ENCODE measurements at regions of chr10 and their contacts with region 1.

Region 1: GRCh38 chr10:119859420-119860258 is 13.0 kb downstream of the MCMBP start:
- DNase-seq: no peak
- ATAC-seq: no peak
- H3K4me3 ChIP-seq: no peak overlapping the region
- H3K27ac ChIP-seq: no peak overlapping the region
- H3K4me1 ChIP-seq: no peaks in the 10 kb centered on the region
- H3K27me3 ChIP-seq: no peaks in the 10 kb centered on the region

Region 2: GRCh38 chr10:119391440-119392251 is 468.0 kb before region 1 on chr10:
- intact Hi-C with region 1: no loop called
- DNase-seq: peak in 2 of 3 donors; percentile 48 to 51
- ATAC-seq: peak in 1 of 2 donors; percentile 31
- H3K4me3 ChIP-seq: no peak overlapping the region
- H3K27ac ChIP-seq: no peak overlapping the region
- H3K4me1 ChIP-seq: peaks cover 22% of the 10 kb centered on the region
- H3K27me3 ChIP-seq: no peaks in the 10 kb centered on the region

Region 3: DNA sequence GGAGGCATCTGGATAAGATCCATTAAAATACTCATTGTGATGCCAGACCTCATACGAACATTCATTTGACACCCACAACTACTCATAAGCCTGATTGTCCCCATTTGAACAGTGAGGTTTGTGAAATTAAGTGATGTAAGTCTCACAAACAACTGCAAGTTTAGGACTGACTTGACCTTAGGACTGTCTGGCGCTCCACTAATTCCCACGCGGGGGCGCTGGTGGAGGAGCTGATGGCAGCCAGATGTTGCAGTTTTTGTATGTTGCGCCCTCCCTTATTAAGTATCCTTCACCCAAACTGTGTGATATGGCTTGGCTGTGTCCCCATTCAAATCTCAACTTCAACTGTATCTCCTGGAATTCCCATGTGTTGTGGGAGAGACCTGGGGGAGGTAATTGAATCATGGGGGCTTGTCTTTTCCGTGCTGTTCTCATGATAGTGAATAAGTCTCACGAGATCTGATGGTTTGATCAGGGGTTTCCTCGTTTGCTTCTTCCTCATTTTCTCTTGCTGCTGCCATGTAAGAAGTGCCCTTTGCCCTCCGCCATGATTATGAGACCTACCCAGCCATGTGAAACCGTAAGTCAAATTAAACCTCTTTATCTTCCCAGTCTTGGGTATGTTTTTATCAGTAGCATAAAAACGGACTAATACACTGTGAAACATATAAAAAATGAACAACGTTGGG is 242.6 kb before region 1 on chr10:
- intact Hi-C with region 1: loop called in 1 of 4 experiments (anchors 10 kb)
- DNase-seq: peak; percentile 52 to 66 (median 64)
- ATAC-seq: no peak
- H3K4me3 ChIP-seq: no peak overlapping the region
- H3K27ac ChIP-seq: no peak overlapping the region
- H3K4me1 ChIP-seq: peaks cover 3% of the 10 kb centered on the region
- H3K27me3 ChIP-seq: no peaks in the 10 kb centered on the region

Region 4: DNA sequence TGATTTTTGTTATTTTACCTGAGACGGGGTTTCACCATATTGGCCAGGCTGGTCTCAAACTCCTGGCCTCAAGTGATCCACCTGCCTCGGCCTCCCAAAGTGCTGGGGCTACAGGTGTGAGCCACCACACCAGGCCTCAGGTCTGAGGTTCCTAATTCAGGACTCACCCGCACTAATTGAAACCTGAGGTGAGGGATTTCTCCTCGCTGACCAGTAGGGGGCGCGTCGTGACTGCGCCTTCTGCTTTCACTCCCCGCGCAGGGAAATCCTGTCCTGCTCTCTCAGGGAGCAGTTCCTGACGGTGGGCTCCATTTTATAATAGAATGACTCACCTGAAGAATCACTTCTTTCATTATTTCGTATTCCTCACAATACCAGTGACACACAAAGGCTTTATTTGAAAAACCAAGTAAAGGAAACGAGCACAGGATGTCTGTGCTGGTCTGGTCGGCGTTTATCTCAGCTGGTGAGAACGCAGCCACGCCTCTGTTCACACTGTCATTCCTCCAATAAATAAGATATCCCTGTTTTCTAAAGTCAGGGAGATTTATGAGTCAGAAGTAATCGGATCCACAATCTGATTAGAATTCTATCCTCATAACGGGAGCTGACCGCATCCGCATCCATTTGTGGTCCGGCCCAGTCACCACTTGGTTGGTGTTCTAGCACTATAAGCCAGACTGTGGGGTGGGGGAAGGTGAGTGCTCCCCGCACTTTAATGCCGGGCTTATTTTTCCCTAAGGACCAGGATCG is 173.0 kb before region 1 on chr10:
- intact Hi-C with region 1: loop called in 2 of 4 experiments (anchors 5 to 10 kb)
- DNase-seq: peak; percentile 82 to 92 (median 86)
- ATAC-seq: peak; percentile 82 to 88
- H3K4me3 ChIP-seq: peak overlapping the region; percentile 6
- H3K27ac ChIP-seq: no peak overlapping the region
- H3K4me1 ChIP-seq: peaks cover 3% of the 10 kb centered on the region
- H3K27me3 ChIP-seq: no peaks in the 10 kb centered on the region

Region 5: DNA sequence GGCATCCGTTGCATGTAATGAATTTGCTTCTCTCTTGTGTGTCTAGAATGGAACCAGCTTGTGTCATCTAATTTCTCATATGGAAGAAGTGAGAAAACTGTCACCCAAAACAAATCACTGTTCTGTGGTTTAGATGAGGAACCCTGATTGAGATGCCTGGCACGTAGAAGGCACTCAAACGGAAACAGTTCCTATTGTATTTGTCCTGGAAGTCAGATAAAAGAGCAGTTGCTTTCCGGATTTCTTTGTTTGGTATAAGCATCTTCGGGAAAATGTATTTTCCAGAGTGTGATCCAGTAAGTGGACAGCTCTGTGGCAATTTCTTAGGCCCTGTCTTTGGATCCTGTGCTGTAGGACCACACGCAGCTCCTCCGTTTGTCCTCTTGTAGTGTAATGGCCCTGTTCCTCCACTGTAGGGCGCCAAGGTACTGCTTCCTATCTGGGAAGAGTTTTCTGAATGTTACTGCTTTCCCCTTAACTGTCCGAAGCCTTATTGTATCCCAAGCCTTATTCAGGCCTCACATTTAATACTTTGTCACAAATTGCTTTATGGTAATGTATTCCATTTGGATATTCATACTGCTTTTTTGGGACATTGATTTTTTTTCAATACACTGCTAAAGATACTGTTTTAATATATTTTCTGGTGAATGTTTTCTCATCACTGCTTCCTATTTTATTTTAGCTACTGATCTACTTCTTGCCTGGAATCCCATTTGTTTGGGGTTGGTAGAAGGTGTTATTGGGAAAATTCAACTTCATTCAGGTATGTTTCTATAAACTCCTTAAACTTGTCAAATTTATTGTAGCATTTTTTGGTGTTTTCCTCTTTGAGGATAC is 109.0 kb before region 1 on chr10:
- intact Hi-C with region 1: loop called in 3 of 4 experiments (anchors 5 to 10 kb)
- DNase-seq: peak; percentile 57 to 80 (median 66)
- ATAC-seq: peak; percentile 92 to 96
- H3K4me3 ChIP-seq: no peak overlapping the region
- H3K27ac ChIP-seq: no peak overlapping the region
- H3K4me1 ChIP-seq: no peaks in the 10 kb centered on the region
- H3K27me3 ChIP-seq: no peaks in the 10 kb centered on the region

Region 6: GRCh38 chr10:120011359-120012130 is 151.9 kb after region 1 on chr10:
- intact Hi-C with region 1: no loop called
- DNase-seq: peak in 1 of 3 donors; percentile 42
- ATAC-seq: no peak
- H3K4me3 ChIP-seq: no peak overlapping the region
- H3K27ac ChIP-seq: no peak overlapping the region
- H3K4me1 ChIP-seq: no peaks in the 10 kb centered on the region
- H3K27me3 ChIP-seq: no peaks in the 10 kb centered on the region

Region 7: GRCh38 chr10:120156614-120157274 is 297.1 kb after region 1 on chr10:
- intact Hi-C with region 1: no loop called
- DNase-seq: no peak
- ATAC-seq: no peak
- H3K4me3 ChIP-seq: no peak overlapping the region
- H3K27ac ChIP-seq: no peak overlapping the region
- H3K4me1 ChIP-seq: no peaks in the 10 kb centered on the region
- H3K27me3 ChIP-seq: no peaks in the 10 kb centered on the region

Region 8: DNA sequence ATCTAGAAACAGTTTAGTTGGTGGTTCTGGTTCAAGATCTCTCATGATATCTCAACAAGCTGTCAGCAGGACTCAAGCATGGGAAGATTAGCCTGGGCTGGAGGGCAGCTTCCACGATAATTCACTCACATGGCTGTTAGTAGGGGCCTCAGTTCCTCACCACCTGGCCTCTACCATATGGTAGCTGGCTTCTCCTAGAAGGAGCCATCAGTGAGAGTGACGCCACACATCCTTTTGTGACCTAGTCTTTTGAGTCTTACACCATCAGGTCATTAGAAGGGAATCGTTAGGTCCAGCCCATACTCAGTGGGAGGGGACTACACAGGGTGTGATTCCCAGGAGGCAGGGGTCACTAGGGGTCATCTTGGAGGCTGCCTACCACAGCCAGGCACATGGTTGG is 358.1 kb after region 1 on chr10:
- intact Hi-C with region 1: no loop called
- DNase-seq: no peak
- ATAC-seq: no peak
- H3K4me3 ChIP-seq: no peak overlapping the region
- H3K27ac ChIP-seq: no peak overlapping the region
- H3K4me1 ChIP-seq: no peaks in the 10 kb centered on the region
- H3K27me3 ChIP-seq: no peaks in the 10 kb centered on the region